GM12878 (cell line): ENCODE measurements at regions of chr15 and their contacts with region 1.

Region 1: GRCh38 chr15:73601451-73602445 is 31.4 kb downstream of the NPTN start:
- DNase-seq: no peak
- ATAC-seq: peak; percentile 33; the same call in 2 of the 3 replicates
- H3K4me3 ChIP-seq: no peak overlapping the region
- H3K27ac ChIP-seq: no peak overlapping the region
- H3K4me1 ChIP-seq: peaks cover 19% of the 10 kb centered on the region
- H3K27me3 ChIP-seq: no peaks in the 10 kb centered on the region
- CTCF ChIP-seq: no peak
- EP300 ChIP-seq: no peak
- POLR2A ChIP-seq: no peak
- RAD21 ChIP-seq: no peak

Region 2: GRCh38 chr15:73375755-73376305 is 225.9 kb before region 1 on chr15:
- CTCF ChIA-PET with region 1: no interaction called
- POLR2A ChIA-PET with region 1: no interaction called
- RAD21 ChIA-PET with region 1: no interaction called
- SMC1A ChIA-PET with region 1: no interaction called
- in situ Hi-C with region 1: no loop called
- intact Hi-C with region 1: no loop called
- DNase-seq: no peak
- ATAC-seq: no peak
- H3K4me3 ChIP-seq: no peak overlapping the region
- H3K27ac ChIP-seq: no peak overlapping the region
- H3K4me1 ChIP-seq: no peaks in the 10 kb centered on the region
- H3K27me3 ChIP-seq: no peaks in the 10 kb centered on the region
- CTCF ChIP-seq: no peak
- EP300 ChIP-seq: no peak
- POLR2A ChIP-seq: no peak
- RAD21 ChIP-seq: no peak

Region 3: DNA sequence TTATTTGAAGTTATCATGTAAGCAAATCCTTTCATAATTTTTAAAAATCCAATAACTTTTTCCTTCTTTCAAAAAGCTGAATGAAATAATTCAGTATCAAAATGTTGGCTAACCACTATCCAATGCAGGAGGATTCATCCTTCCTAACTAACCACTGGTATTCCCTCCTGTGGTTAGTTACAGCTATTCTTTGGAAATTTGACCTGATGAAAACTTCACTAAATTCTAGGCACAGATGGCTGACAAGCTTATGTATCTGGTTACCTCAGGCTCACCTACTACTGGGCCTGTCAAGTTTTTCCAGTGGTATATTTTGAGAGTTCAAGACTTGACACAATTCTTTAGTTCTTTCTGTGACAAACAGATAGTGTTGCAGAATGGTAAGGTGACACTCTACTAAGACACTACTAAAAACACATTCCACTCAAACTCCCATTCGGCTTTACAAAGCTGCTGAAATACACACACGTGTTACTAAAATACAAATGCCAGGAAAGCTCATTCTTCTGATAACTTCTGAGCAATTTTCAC is 15.6 kb after region 1 on chr15:
- CTCF ChIA-PET with region 1: interaction called, 53 read pairs
- POLR2A ChIA-PET with region 1: interaction called, 9 read pairs
- RAD21 ChIA-PET with region 1: interaction called, 5 read pairs
- SMC1A ChIA-PET with region 1: interaction called, 130 read pairs
- in situ Hi-C with region 1: no loop called
- intact Hi-C with region 1: no loop called
- DNase-seq: no peak
- ATAC-seq: no peak
- H3K4me3 ChIP-seq: no peak overlapping the region
- H3K27ac ChIP-seq: no peak overlapping the region
- H3K4me1 ChIP-seq: 0 out of 2 replicates have a peak, but pooled peaks cover 7% of the 10 kb centered on the region
- H3K27me3 ChIP-seq: no peaks in the 10 kb centered on the region
- CTCF ChIP-seq: no peak
- EP300 ChIP-seq: no peak
- POLR2A ChIP-seq: no peak
- RAD21 ChIP-seq: no peak